HEK293 (cell line): ENCODE measurements at regions of chr13 and their contacts with region 1.

Region 1: DNA sequence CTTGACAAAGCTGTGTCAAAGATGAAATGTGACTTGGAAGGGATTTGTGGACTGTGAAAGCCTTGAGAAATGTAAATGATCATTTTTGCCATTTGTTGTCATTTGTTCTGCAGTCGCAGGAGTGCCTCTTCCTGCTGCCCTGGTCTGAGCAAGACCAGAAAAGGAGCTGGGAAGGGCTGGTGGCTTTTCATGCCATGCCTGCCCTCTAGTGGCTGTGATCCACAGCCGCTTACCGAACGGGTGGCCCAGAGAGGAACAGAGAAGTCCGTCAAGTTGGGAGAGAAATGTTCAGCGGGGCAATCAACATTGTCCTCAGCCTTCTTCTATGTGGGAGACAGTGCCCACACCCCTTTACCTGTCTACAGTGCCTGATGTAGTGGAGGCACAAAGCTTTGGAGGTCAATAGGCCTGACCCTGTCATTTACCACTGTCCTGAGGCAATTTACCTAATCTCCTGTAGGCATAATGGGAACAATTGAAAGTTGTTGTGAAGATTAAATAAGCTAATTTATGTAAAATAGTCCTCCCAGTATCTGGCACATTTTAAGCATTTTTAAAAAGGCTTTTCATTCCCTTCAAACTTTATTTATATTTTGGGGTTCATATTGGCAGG is 224.4 kb downstream of the B3GLCT start:
- H3K4me3 ChIP-seq: no peak overlapping the region
- H3K27ac ChIP-seq: no peak overlapping the region
- H3K4me1 ChIP-seq: no peaks in the 10 kb centered on the region
- CTCF ChIP-seq: peak; percentile 57

Region 2: GRCh38 chr13:31242916-31243315 is 181.3 kb before region 1 on chr13:
- CTCF ChIA-PET with region 1: interaction called, 84 read pairs
- POLR2A ChIA-PET with region 1: no interaction called
- H3K4me3 ChIP-seq: no peak overlapping the region
- H3K27ac ChIP-seq: no peak overlapping the region
- H3K4me1 ChIP-seq: no peaks in the 10 kb centered on the region
- CTCF ChIP-seq: no peak

Region 3: DNA sequence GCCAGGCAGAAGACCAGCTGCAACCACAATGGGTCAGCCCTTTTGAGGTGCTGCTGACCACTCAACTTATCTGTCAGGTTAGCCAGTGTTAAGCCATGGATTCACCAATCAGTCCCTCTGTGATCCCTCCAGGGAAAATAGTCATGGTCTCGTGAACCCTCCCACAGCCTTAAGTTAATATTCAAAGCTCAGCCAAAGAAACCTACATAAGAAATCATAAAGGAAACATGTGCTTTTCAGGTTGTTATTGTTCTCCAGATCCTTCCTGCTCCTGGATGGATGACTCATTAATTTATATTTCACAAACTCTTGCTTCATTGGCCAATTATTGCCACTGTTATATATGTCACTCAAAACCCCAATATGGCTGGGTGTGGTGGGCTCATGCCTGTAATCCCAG is 62.5 kb before region 1 on chr13:
- CTCF ChIA-PET with region 1: no interaction called
- POLR2A ChIA-PET with region 1: no interaction called
- H3K4me3 ChIP-seq: no peak overlapping the region
- H3K27ac ChIP-seq: no peak overlapping the region
- H3K4me1 ChIP-seq: no peaks in the 10 kb centered on the region
- CTCF ChIP-seq: no peak

Region 4: DNA sequence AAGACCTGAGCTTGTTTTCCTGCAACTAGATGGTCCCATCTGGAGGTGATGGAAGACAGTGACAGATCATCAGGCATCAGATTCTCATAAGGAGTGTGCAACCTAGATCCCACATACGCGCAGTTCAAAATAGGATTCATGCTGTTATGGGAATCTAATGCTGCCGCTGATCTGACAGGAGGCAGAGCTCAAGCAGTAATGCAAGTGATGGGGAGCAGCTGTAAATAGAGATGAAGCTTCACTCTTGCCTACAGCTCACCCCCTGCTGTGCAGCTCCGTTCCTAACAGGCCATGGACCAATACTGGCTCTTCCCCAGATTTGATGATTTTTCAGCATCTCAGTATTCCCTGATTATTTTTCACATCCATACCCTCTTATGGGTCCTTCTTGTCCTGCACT is 106.7 kb after region 1 on chr13:
- CTCF ChIA-PET with region 1: no interaction called
- POLR2A ChIA-PET with region 1: no interaction called
- H3K4me3 ChIP-seq: no peak overlapping the region
- H3K27ac ChIP-seq: no peak overlapping the region
- H3K4me1 ChIP-seq: no peaks in the 10 kb centered on the region
- CTCF ChIP-seq: no peak